ENCODE measurements at regions of chr14 and their contacts with region 1.

Region 1: DNA sequence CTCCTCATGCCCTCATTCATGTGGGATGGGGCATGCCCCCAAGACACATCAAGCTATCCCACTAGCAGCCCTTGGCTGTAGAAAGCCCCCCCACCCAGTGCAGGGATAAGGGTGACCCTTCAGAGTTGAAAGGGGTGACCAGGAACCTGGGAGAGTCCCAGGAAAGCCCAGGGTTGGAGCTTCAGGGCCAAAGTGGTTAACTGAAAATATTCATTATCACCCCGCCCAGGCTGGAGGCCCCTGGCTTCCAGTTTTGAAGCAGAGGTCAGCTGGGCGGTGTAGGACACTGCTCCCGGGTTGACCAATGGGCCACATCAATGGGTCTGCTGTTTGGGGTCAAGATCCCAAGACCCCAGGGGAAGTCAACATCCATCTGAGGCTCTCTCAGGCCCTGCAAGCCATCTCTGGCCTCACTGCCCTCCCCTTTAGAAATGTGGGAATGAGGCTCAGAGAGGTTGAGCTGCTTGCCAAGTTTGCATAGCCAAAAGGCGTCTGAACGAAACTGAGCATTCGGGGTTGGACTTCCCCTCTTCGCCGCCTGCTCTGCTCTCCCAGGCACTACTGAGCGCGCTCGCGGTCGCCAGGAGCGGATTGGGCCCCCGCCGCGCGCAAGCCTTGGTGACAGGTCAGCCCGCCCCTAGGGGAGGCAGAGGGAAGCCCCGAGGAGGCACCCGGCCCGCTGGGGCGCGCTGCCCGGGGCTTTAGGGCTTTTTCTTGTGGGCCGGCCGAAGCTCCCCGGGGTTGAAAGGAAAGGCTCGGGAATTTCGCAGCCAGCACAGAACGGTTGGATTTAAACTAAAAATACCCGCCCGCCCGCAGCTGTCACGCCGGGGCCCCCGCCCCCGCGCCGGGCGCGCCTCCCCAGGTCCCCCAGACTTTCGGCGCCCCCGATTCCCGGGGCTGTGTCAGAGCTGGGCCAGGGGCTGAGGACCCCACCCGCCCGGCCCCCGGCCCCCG is 576 bp downstream of the SYNE3 start:
- DNase-seq: peak; percentile 90
- ATAC-seq: peak; percentile 59
- H3K4me3 ChIP-seq: peak overlapping the region; percentile 39 to 92
- H3K27ac ChIP-seq: peak overlapping the region; percentile 6 to 79
- H3K4me1 ChIP-seq: peaks cover 2% of the 10 kb centered on the region in 2 donors
- H3K27me3 ChIP-seq: no peaks in the 10 kb centered on the region

Region 2: DNA sequence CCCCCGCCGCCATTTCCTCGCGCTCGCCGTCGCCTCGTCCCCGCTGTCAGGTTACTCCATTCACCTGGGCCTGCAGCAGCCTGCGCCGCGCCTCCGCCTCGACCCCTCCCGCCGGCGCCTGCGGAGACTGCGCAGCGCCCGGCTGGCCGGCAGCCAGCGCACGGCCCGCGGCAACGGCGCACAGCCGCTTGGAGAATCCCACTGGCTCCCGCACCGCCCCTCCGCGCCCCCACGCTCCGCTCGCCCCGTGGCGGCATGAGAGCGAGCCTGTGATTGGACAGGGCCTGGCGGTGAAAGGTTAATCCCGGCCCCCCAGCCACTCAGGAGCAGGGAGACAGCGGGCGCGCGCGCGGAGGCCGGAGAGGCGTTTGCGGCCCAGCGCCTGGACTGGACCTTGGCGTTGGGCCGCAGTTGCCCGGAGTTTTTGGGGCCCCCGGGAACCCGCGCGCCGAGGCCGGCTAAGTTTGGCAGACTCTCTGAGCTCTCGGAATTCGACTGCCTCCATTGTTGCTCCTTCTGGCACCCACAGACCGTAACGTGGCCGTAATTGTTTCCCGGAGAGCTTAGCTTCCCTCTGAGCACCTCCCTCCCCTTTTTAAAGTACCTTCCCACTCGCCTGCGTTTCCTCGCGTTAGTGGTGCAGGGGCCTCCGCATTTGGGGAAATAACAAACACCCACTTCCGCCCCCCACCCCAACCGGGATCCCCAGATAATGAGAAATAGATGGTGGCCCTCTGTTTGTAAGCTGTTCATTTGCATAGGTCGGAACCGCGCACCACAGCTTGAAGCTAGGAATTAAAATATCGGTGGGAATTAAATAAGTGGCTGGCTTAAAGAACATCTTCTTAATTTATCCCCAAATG is 358.3 kb before region 1 on chr14 and contains the start of gene DICER1:
- intact Hi-C with region 1: loop called in 1 of 2 experiments (anchors 10 kb)
- DNase-seq: peak; percentile 98 to 100
- ATAC-seq: peak; percentile 99
- H3K4me3 ChIP-seq: peak within 1 kb of the TSS; percentile 72 to 99
- H3K27ac ChIP-seq: peak within 1 kb of the TSS; percentile 47 to 69
- H3K4me1 ChIP-seq: peaks cover 3 to 5% of the 10 kb centered on the region in 2 donors
- H3K27me3 ChIP-seq: no peaks in the 10 kb centered on the region
- total RNA-seq, gene DICER1: 60.9 to 73.6 TPM

Measured in aorta (tissue), 5 donors.